Mammary epithelial cell (primary cell): ENCODE measurements at regions of chr2 and their contacts with region 1.

Region 1: GRCh38 chr2:71798266-71799012 is 345.1 kb downstream of the DYSF start:
- DNase-seq: peak; percentile 22
- H3K4me3 ChIP-seq: no peak overlapping the region
- H3K27ac ChIP-seq: no peak overlapping the region
- H3K4me1 ChIP-seq: no peaks in the 10 kb centered on the region
- H3K27me3 ChIP-seq: no peaks in the 10 kb centered on the region
- CTCF ChIP-seq: peak; percentile 73 to 94

Region 2: DNA sequence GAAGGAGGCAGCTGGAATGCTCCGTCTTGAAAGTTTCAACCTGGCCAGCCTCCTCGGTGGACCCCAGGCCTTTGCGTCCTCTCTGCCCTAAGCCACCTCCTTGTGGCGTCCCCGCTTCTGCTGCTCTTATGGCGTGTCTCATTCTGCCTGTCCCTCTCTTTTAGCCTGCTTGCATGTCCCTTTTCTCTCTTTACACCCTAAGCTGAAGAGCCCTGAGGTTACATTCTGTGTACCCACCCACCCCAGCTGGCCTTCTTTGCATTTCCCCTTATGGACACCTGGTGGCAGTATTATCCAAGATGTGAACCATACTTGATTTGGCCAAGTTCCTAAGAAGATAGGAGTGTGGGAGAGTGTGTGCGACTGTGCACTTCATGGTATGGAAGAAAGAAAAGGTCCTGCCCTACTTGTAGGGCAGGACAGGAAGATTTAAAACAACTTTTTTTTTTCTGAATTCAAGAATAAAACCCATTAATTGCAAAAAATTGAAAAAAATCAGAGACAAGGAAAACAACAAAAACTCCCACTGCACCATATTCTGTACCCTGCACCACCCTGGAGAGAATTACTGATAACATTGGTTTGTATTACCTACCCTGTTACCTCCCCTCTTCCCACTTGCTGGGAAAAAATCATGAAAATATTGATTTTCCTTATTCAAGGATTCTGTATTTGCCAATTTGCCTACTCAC is 267.7 kb before region 1 on chr2:
- CTCF ChIA-PET with region 1: no interaction called
- dilution Hi-C with region 1: no loop called
- in situ Hi-C with region 1: no loop called
- intact Hi-C with region 1: loop called (anchors 1 kb)
- DNase-seq: peak; percentile 24
- H3K4me3 ChIP-seq: no peak overlapping the region
- H3K27ac ChIP-seq: no peak overlapping the region
- H3K4me1 ChIP-seq: peaks cover 14% of the 10 kb centered on the region
- H3K27me3 ChIP-seq: no peaks in the 10 kb centered on the region
- CTCF ChIP-seq: peak; percentile 74 to 76

Region 3: GRCh38 chr2:71609958-71610357 is 188.5 kb before region 1 on chr2:
- CTCF ChIA-PET with region 1: no interaction called
- dilution Hi-C with region 1: no loop called
- in situ Hi-C with region 1: loop called in 1 of 2 experiments (anchors 10 kb)
- intact Hi-C with region 1: loop called (anchors 1 kb)
- DNase-seq: peak; percentile 10
- H3K4me3 ChIP-seq: no peak overlapping the region
- H3K27ac ChIP-seq: no peak overlapping the region
- H3K4me1 ChIP-seq: no peaks in the 10 kb centered on the region
- H3K27me3 ChIP-seq: no peaks in the 10 kb centered on the region
- CTCF ChIP-seq: peak; percentile 6 to 42

Region 4: DNA sequence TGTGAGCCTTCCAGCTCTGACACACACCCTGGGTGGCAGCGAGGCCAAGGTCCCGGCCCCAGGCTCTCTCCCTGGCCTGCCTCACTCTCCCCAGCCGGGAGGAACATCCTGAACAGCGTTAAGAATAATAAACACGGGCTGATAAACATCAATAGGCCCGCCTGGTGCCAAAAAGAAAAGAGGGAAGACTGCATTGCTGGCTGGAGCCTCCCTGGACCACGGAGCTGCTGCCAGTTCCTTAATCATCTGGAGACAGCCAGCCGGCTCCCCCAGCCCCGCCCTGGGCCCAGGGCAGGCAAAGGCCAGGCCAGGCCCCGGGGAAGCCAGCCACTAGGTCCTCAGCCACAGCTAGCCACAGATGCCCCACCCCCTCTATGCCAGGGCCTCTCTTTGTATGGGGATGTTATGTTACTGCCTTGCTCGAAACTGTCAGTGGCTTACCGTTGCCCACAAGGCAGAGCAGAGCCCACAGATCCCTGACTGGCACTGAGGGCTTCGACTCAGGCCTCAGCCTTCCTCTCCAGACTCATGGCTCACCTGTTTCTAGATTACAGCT is 51.4 kb before region 1 on chr2:
- CTCF ChIA-PET with region 1: no interaction called
- dilution Hi-C with region 1: loop called (anchors 5 kb)
- in situ Hi-C with region 1: no loop called
- intact Hi-C with region 1: no loop called
- DNase-seq: peak; percentile 9
- H3K4me3 ChIP-seq: no peak overlapping the region
- H3K27ac ChIP-seq: no peak overlapping the region
- H3K4me1 ChIP-seq: peaks cover 36% of the 10 kb centered on the region
- H3K27me3 ChIP-seq: no peaks in the 10 kb centered on the region
- CTCF ChIP-seq: no peak

Region 5: GRCh38 chr2:71813807-71814470 is 15.5 kb after region 1 on chr2:
- CTCF ChIA-PET with region 1: no interaction called
- dilution Hi-C with region 1: no loop called
- in situ Hi-C with region 1: no loop called
- intact Hi-C with region 1: no loop called
- DNase-seq: no peak
- H3K4me3 ChIP-seq: no peak overlapping the region
- H3K27ac ChIP-seq: no peak overlapping the region
- H3K4me1 ChIP-seq: no peaks in the 10 kb centered on the region
- H3K27me3 ChIP-seq: no peaks in the 10 kb centered on the region
- CTCF ChIP-seq: no peak

Region 6: GRCh38 chr2:71876542-71877451 is 78.4 kb after region 1 on chr2:
- CTCF ChIA-PET with region 1: no interaction called
- dilution Hi-C with region 1: no loop called
- in situ Hi-C with region 1: no loop called
- intact Hi-C with region 1: loop called (anchors 1 kb)
- DNase-seq: no peak
- H3K4me3 ChIP-seq: no peak overlapping the region
- H3K27ac ChIP-seq: no peak overlapping the region
- H3K4me1 ChIP-seq: peaks cover 16% of the 10 kb centered on the region
- H3K27me3 ChIP-seq: no peaks in the 10 kb centered on the region
- CTCF ChIP-seq: no peak

Region 7: DNA sequence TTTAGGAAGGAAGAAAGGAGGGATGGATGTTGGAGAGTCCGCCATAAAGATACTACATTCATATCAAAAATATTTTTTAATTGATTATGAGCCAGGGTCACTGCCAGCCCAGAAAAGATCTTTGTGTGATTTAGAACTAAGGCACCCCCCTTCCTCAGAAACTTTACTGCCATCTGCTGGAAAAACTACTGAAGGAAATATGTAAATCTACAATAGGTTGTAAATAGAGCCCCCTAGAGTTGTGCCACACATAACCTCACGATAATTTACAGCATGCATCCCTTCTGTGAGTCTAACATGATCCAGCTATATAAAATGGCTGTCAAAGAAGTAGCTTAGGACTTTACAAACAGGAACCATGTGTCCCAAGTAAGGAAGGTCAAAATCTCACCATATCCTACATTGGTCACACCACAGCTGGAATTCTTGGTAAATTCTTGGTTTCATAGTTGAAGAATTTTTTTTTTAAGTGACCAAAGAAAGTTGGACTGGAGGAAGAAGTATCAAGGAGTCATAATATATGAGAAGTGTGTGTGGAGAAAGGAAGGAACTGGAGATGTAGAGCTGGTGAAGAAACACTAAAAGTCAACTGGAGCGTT is 196.7 kb after region 1 on chr2:
- CTCF ChIA-PET with region 1: no interaction called
- dilution Hi-C with region 1: no loop called
- in situ Hi-C with region 1: no loop called
- intact Hi-C with region 1: loop called (anchors 1 kb)
- DNase-seq: peak; percentile 8
- H3K4me3 ChIP-seq: no peak overlapping the region
- H3K27ac ChIP-seq: no peak overlapping the region
- H3K4me1 ChIP-seq: no peaks in the 10 kb centered on the region
- H3K27me3 ChIP-seq: no peaks in the 10 kb centered on the region
- CTCF ChIP-seq: peak; percentile 18 to 55

Region 8: GRCh38 chr2:72745679-72746368 is 947.4 kb after region 1 on chr2:
- CTCF ChIA-PET with region 1: no interaction called
- dilution Hi-C with region 1: no loop called
- in situ Hi-C with region 1: loop called in 1 of 2 experiments (anchors 25 kb)
- intact Hi-C with region 1: no loop called
- DNase-seq: peak; percentile 46
- H3K4me3 ChIP-seq: no peak overlapping the region
- H3K27ac ChIP-seq: no peak overlapping the region
- H3K4me1 ChIP-seq: peaks cover 6% of the 10 kb centered on the region
- H3K27me3 ChIP-seq: no peaks in the 10 kb centered on the region
- CTCF ChIP-seq: peak; percentile 68 to 76